ENCODE measurements at regions of chr2 and their contacts with region 1.

Region 1: GRCh38 chr2:148739454-148740105 is 95.0 kb downstream of the EPC2 start:
- DNase-seq: no peak
- H3K4me3 ChIP-seq: no peak overlapping the region
- H3K4me3 Mint-ChIP-seq: peak overlapping the region in 2 of 7 donors; percentile 32 to 56
- H3K27ac ChIP-seq: no peak overlapping the region
- H3K27ac Mint-ChIP-seq: peak overlapping the region in 2 of 8 donors; percentile 3 to 91
- H3K4me1 ChIP-seq: peaks cover 7% of the 10 kb centered on the region
- H3K4me1 Mint-ChIP-seq: peaks cover 52 to 84% (median 82%) of the 10 kb centered on the region in 3 donors
- H3K27me3 ChIP-seq: no peaks in the 10 kb centered on the region
- H3K27me3 Mint-ChIP-seq: no peaks in the 10 kb centered on the region

Region 2: DNA sequence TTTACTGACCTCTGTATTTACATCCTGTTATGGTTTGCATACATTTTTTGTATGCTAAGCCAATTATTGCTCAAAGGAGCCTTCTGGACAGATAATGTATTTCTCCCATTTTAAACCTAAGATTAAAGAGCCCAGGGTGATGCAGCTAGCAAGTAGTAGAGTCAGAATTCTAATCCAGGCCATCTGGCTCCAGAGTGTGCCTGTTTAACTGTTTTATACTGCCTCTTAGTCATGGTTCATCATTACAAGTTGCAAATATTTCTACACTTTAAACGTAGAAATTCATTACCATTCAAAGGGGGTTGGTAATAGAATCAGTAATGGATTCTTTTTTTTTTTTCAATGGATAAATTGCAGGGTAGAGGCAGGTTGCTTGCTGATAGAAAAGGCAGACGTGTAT is 42.6 kb before region 1 on chr2:
- CTCF ChIA-PET with region 1: no interaction called
- POLR2A ChIA-PET with region 1: interaction called, 11 read pairs
- DNase-seq: no peak
- H3K4me3 ChIP-seq: no peak overlapping the region
- H3K4me3 Mint-ChIP-seq: no peak overlapping the region
- H3K27ac ChIP-seq: no peak overlapping the region
- H3K27ac Mint-ChIP-seq: peak overlapping the region in 1 of 8 donors; percentile 11
- H3K4me1 ChIP-seq: no peaks in the 10 kb centered on the region
- H3K4me1 Mint-ChIP-seq: peaks cover 33 to 48% (median 41%) of the 10 kb centered on the region in 3 donors
- H3K27me3 ChIP-seq: no peaks in the 10 kb centered on the region
- H3K27me3 Mint-ChIP-seq: no peaks in the 10 kb centered on the region

Region 3: DNA sequence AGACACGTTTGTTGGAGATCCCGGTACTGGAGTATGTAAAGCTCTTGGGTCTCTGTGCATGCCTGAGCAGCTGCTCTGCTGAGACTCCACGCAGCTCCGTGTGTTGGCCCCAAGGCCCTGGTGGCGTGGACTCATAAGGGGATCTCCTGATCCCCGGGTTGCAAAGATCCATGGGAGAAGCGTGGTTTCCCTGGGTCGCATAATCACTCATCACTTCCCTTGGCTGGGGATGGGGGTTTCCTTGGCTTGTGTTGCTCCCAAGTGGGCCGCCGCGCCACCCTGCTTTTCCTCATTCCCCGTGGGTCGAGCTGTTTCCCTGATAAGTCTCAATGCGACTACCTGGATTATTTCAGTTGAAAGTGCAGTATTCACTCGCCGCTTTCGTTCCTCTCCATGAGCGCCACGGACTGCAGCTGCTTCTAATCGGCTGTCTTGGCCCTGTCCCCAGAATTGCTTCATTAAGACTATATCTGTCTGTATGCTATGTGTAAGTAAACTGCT is 19.0 kb before region 1 on chr2:
- CTCF ChIA-PET with region 1: no interaction called
- POLR2A ChIA-PET with region 1: no interaction called
- DNase-seq: no peak
- H3K4me3 ChIP-seq: no peak overlapping the region
- H3K4me3 Mint-ChIP-seq: peak overlapping the region in 5 of 7 donors; percentile 1 to 36 (median 18)
- H3K27ac ChIP-seq: no peak overlapping the region
- H3K27ac Mint-ChIP-seq: peak overlapping the region in 4 of 8 donors; percentile 28 to 64 (median 40)
- H3K4me1 ChIP-seq: peaks cover 26% of the 10 kb centered on the region
- H3K4me1 Mint-ChIP-seq: peaks cover 94 to 98% (median 97%) of the 10 kb centered on the region in 3 donors
- H3K27me3 ChIP-seq: no peaks in the 10 kb centered on the region
- H3K27me3 Mint-ChIP-seq: no peaks in the 10 kb centered on the region

Region 4: GRCh38 chr2:148756396-148756931 is 16.9 kb after region 1 on chr2:
- CTCF ChIA-PET with region 1: no interaction called
- POLR2A ChIA-PET with region 1: no interaction called
- DNase-seq: no peak
- H3K4me3 ChIP-seq: no peak overlapping the region
- H3K4me3 Mint-ChIP-seq: no peak overlapping the region
- H3K27ac ChIP-seq: no peak overlapping the region
- H3K27ac Mint-ChIP-seq: peak overlapping the region in 2 of 8 donors; percentile 71 to 75
- H3K4me1 ChIP-seq: no peaks in the 10 kb centered on the region
- H3K4me1 Mint-ChIP-seq: peaks cover 27 to 39% (median 35%) of the 10 kb centered on the region in 3 donors
- H3K27me3 ChIP-seq: no peaks in the 10 kb centered on the region
- H3K27me3 Mint-ChIP-seq: no peaks in the 10 kb centered on the region

Region 5: GRCh38 chr2:148770047-148770446 is 30.5 kb after region 1 on chr2:
- CTCF ChIA-PET with region 1: no interaction called
- POLR2A ChIA-PET with region 1: no interaction called
- DNase-seq: no peak
- H3K4me3 ChIP-seq: no peak overlapping the region
- H3K4me3 Mint-ChIP-seq: no peak overlapping the region
- H3K27ac ChIP-seq: no peak overlapping the region
- H3K27ac Mint-ChIP-seq: no peak overlapping the region
- H3K4me1 ChIP-seq: no peaks in the 10 kb centered on the region
- H3K4me1 Mint-ChIP-seq: peaks cover 7 to 10% (median 9%) of the 10 kb centered on the region in 3 donors
- H3K27me3 ChIP-seq: no peaks in the 10 kb centered on the region
- H3K27me3 Mint-ChIP-seq: no peaks in the 10 kb centered on the region

Region 6: GRCh38 chr2:149200109-149200520 is 460.5 kb after region 1 on chr2:
- CTCF ChIA-PET with region 1: no interaction called
- POLR2A ChIA-PET with region 1: no interaction called
- DNase-seq: no peak
- H3K4me3 ChIP-seq: no peak overlapping the region
- H3K4me3 Mint-ChIP-seq: no peak overlapping the region
- H3K27ac ChIP-seq: no peak overlapping the region
- H3K27ac Mint-ChIP-seq: no peak overlapping the region
- H3K4me1 ChIP-seq: no peaks in the 10 kb centered on the region
- H3K4me1 Mint-ChIP-seq: no peaks in the 10 kb centered on the region
- H3K27me3 ChIP-seq: no peaks in the 10 kb centered on the region
- H3K27me3 Mint-ChIP-seq: no peaks in the 10 kb centered on the region